Activated T-helper 1 cell treated with anti-CD3 and anti-CD28 coated beads, Interleukin-12 subunit alpha, Interleukin-12 subunit beta, Interleukin-2, Interleukin-4 antibody, amounts not matched to agents 30 ng/mL and 10 ng/mL and 1 ng/mL, durations not matched to agents 14 hours and 24 hours and 36 hours (primary cell): ENCODE measurements at regions of chr6 and their contacts with region 1.

Region 1: DNA sequence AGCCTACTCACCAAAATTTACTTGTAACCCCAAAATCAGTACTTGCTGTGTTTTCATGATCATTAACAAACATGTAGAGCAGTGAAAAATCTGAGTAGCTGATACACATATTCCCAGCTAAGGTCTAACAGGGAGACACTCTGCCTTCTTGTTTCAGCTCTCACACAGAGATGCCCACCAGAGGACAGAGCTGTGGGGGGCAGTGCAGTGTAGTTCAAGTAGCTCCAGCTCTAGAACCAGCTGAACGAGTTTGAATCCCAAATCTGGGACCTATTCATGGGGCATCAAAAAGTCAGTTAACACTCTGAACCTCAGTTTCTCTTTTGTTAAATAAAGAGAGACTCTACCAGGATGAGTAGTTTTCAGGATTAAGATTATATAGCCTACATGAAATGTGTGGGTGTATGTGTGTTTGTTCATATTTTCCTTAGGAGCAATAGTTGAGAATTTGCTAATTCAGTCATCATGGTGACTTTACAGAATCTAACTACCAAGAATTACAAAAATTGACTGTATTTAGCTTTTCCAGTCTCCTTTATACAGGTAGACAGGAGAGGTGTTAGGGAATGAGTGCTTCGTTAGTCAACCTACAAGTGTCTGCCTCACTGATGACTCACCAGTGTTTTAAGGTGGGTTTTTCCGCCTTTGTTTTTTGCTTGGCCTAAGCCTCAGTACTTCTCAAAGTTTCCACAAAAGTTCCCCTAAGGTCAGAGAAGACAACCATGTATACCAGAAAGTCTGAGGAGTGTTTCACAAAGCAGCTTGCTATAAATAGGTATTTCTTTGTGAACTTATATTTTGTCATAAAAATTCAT is 164.0 kb upstream of the RUNX2 start:
- DNase-seq: peak; percentile 31
- H3K4me3 Mint-ChIP-seq: peak overlapping the region; percentile 35
- H3K27ac Mint-ChIP-seq: peak overlapping the region; percentile 89
- H3K4me1 Mint-ChIP-seq: peaks cover 62% of the 10 kb centered on the region
- H3K27me3 Mint-ChIP-seq: no peaks in the 10 kb centered on the region

Region 2: DNA sequence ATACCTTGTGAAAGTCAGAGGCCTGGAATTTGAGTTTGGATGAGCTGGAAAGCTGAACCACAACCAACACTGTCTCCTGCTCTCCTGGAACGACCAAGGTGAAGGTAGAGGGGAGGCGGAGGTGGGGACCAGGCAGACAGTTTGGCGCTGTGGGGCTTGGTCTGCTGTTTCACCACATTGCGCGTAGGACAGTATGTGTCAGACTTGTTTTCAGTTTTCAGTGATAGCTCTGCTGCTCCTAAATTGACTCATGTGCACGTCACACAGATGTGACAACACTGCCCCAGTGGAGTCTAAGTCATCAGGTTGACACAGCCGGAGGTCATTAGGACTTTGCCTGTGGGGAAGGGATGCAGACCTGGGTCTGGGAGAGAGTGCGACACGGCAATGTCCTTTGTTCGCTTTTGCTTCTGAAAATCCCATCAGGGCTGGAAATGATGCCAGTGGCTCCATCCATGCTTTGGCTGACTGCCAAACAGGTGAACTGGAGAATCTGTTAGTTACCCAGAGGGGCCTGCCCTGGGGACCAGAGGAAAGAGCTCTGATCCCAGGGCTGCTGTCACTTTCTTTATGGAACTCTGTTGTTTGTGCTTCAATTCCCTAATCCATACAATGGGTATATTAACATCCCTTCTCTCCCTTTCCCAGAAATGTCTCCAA is 521.2 kb before region 1 on chr6:
- intact Hi-C with region 1: loop called (anchors 1 kb)
- DNase-seq: no peak
- H3K4me3 Mint-ChIP-seq: no peak overlapping the region
- H3K27ac Mint-ChIP-seq: peak overlapping the region; percentile 84
- H3K4me1 Mint-ChIP-seq: peaks cover 21% of the 10 kb centered on the region
- H3K27me3 Mint-ChIP-seq: peaks cover 2% of the 10 kb centered on the region

Region 3: GRCh38 chr6:44976719-44977641 is 187.2 kb before region 1 on chr6:
- intact Hi-C with region 1: loop called (anchors 2 kb)
- DNase-seq: no peak
- H3K4me3 Mint-ChIP-seq: peak overlapping the region; percentile 4
- H3K27ac Mint-ChIP-seq: peak overlapping the region; percentile 84
- H3K4me1 Mint-ChIP-seq: peaks cover 43% of the 10 kb centered on the region
- H3K27me3 Mint-ChIP-seq: no peaks in the 10 kb centered on the region

Region 4: DNA sequence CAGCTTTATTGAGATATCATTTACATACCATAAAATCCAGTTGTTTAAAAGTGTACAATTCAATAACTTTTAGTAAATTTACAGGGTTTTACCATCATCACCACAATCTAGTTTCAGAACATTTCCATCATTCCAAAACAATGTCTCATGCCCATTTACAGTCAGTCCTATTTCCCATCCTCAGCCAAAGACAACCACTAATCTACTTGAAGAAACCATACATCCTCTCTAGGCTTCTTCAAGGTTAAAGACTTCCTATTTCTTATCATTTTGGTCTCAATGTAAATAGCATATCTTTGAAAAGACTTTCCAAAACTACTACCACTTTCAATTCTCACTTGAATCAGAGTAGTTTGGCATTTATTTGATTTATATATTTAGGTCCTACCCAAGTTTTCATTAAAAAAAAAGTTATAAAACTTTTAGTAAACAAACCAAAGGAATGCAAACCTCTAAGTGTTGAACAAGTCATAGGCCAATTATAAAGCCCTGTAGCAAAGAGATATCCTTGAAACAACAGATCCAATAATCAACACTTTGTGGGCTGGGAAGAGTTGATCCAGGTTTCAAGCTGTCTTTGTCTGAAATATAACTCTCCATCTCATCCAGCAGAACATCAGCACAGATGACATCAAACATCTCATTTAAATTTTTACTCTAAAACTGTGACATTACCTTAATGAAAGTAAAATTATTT is 47.3 kb before region 1 on chr6:
- intact Hi-C with region 1: loop called (anchors 2 kb)
- DNase-seq: no peak
- H3K4me3 Mint-ChIP-seq: no peak overlapping the region
- H3K27ac Mint-ChIP-seq: peak overlapping the region; percentile 47
- H3K4me1 Mint-ChIP-seq: peaks cover 24% of the 10 kb centered on the region
- H3K27me3 Mint-ChIP-seq: no peaks in the 10 kb centered on the region

Region 5: GRCh38 chr6:45132059-45132458 is 32.1 kb before region 1 on chr6:
- intact Hi-C with region 1: no loop called
- DNase-seq: no peak
- H3K4me3 Mint-ChIP-seq: no peak overlapping the region
- H3K27ac Mint-ChIP-seq: no peak overlapping the region
- H3K4me1 Mint-ChIP-seq: peaks cover 7% of the 10 kb centered on the region
- H3K27me3 Mint-ChIP-seq: no peaks in the 10 kb centered on the region

Region 6: DNA sequence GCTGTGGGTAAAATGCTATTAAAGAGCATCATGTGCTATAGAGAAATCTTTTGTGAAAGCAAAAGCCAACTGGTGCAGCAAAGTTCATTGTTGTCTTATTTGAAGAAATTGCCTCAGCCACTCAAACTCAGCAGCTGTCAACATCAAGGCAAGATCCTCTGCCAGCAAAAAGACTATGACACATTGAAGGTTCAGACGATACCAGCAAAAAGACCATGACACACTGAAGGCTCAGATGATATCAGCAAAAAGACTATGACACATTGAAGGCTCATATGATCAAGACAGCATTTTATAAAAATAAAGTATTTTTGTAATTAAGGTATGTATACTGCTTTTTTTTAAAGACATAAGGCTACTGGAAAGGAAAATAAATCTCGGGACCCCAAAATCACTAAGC is 45.6 kb after region 1 on chr6:
- intact Hi-C with region 1: loop called (anchors 1 kb)
- DNase-seq: no peak
- H3K4me3 Mint-ChIP-seq: no peak overlapping the region
- H3K27ac Mint-ChIP-seq: no peak overlapping the region
- H3K4me1 Mint-ChIP-seq: peaks cover 35% of the 10 kb centered on the region
- H3K27me3 Mint-ChIP-seq: no peaks in the 10 kb centered on the region

Region 7: DNA sequence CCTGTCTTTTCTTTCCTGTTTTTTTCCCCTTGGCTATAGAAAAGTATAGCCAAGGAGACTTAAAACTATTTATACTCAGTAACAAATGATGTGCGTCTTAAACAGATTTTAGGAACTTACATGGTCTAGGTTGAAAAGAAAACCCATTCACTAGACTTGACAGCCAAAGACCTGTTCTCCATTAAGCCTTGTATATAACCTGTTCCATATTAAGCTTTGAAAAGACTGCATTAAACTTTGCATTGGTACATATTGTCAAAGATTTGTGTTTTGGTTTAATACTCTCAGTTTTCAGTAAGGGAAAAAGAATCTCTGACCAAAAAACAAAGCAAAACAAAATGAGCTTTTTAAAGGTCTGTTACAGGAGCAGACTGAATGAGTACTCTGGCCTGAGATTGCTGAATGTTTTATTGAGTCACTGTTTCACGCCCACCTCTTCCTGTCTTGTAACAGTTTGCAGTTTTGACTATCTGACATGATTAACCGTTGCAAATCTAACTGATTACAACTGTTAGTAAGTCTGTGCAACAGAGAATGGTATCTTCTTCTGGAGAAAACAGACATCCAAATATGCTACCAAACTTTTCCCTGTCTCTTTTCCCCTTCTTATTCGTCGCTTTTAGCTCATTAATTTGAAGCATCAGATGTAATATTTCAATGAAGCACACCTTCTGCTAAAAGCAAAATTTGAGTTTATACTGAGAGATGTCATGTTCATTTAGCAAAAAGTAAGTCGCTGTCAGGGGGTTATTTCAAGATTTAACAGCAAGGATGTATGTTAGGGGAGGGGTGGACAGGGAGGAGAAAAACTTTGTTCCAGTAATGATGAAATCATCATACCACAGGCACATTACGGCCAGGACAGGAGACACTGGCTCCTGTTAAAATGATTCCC is 272.6 kb after region 1 on chr6:
- intact Hi-C with region 1: loop called (anchors 2 kb)
- DNase-seq: no peak
- H3K4me3 Mint-ChIP-seq: peak overlapping the region; percentile 70
- H3K27ac Mint-ChIP-seq: peak overlapping the region; percentile 86
- H3K4me1 Mint-ChIP-seq: peaks cover 59% of the 10 kb centered on the region
- H3K27me3 Mint-ChIP-seq: no peaks in the 10 kb centered on the region

Region 8: GRCh38 chr6:46011241-46012085 is 847.3 kb after region 1 on chr6:
- intact Hi-C with region 1: loop called (anchors 2 kb)
- DNase-seq: peak; percentile 63
- H3K4me3 Mint-ChIP-seq: peak overlapping the region; percentile 47
- H3K27ac Mint-ChIP-seq: peak overlapping the region; percentile 74
- H3K4me1 Mint-ChIP-seq: peaks cover 55% of the 10 kb centered on the region
- H3K27me3 Mint-ChIP-seq: peaks cover 11% of the 10 kb centered on the region